Right cardiac atrium (tissue), 5 donors: ENCODE measurements at regions of chr4 and their contacts with region 1.

Region 1: DNA sequence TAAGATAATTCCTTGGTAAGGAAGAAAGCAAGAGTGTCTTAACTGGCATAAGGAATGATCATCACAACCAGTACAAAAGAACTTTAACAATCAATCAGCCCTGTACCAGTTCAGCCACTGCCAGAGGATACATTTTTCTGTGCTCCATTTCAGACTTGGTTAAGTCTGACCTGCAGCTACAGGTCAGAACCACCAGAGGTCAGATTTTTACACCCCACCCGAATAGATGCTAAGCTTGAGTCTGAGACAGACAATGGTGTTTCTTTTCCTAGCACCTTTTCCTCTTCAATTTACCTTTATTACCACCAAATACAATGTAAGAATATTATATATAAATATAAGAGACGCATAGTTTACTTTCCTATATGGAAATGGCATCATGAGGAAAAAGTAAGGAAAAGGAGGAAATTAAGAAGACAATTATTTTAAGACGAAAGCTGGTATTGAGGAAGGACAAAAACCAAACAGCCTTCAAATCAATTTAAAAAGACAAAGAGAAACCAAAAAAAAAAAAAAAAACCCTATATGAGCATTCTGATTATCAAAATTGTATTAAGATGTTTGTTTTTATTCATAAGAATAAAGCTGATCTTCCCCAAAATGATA is 215.3 kb upstream of the TTC29 start:
- DNase-seq: no peak
- ATAC-seq: peak; percentile 62 to 70
- H3K4me3 ChIP-seq: no peak overlapping the region
- H3K27ac ChIP-seq: no peak overlapping the region
- H3K4me1 ChIP-seq: peaks cover 4% of the 10 kb centered on the region
- H3K27me3 ChIP-seq: no peaks in the 10 kb centered on the region

Region 2: GRCh38 chr4:146927695-146928094 is 233.3 kb before region 1 on chr4:
- intact Hi-C with region 1: no loop called
- DNase-seq: no peak
- ATAC-seq: no peak
- H3K4me3 ChIP-seq: no peak overlapping the region
- H3K27ac ChIP-seq: no peak overlapping the region
- H3K4me1 ChIP-seq: no peaks in the 10 kb centered on the region
- H3K27me3 ChIP-seq: no peaks in the 10 kb centered on the region

Region 3: DNA sequence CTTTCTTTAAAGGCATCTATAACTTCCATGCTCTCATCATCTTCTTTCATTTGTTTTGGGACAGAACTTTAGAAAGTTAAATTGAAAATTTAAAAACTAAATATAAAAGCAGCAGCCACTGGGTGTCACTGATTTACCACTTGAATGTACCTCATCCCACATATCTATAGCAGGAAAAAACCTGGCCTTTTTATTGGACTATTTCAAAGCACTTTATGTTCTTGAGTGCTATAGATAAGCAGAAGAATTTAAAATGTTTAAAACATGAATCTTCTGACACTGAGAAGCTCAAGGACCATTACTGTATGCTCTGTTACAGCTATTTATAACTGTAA is 50.0 kb before region 1 on chr4:
- intact Hi-C with region 1: loop called in 1 of 4 experiments (anchors 5 kb)
- DNase-seq: no peak
- ATAC-seq: peak in 1 of 2 donors; percentile 61
- H3K4me3 ChIP-seq: no peak overlapping the region
- H3K27ac ChIP-seq: no peak overlapping the region
- H3K4me1 ChIP-seq: no peaks in the 10 kb centered on the region
- H3K27me3 ChIP-seq: no peaks in the 10 kb centered on the region

Region 4: GRCh38 chr4:147731580-147732517 is 570.8 kb after region 1 on chr4 and contains the start of gene ARHGAP10:
- intact Hi-C with region 1: no loop called
- DNase-seq: peak; percentile 79 to 93 (median 92)
- ATAC-seq: peak; percentile 88 to 90
- H3K4me3 ChIP-seq: peak within 1 kb of the TSS; percentile 60
- H3K27ac ChIP-seq: peak within 1 kb of the TSS; percentile 64
- H3K4me1 ChIP-seq: peaks cover 5% of the 10 kb centered on the region
- H3K27me3 ChIP-seq: no peaks in the 10 kb centered on the region
- total RNA-seq, gene ARHGAP10: 43.3 to 54.1 (median 48.7) TPM